Activated CD8-positive, alpha-beta T cell treated with anti-CD3 and anti-CD28 coated beads for 36 hours (primary cell): ENCODE measurements at regions of chr5 and their contacts with region 1.

Region 1: DNA sequence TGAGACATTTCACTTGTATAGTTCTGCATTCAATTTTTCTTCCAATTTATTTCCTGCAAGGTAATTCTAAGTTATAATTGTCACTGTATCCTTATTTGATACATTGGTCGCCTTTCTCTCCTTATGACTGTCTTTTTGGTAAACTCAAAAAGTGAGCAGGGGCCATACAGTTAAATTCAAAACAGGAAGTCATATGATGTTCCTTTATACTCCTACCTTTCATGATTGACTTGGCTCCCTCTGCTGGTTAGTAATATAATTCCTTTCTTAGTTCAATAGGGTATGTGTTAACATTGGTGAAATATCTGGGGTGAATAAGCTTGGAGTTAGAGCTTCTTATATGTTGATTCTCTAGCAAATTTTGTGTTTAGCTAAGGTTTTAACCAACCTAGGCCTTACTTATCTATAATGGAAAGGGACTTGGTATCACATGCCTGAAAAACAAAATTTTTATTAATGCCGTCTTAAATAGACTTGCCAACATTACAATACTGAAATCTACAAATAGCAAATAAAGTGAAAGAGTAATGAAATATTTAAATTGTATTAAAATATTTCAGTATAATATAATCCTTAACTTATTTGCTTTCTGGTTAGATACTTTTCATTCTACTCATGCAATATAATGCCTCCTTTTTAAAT is 6.0 kb upstream of the NIPBL start:
- DNase-seq: no peak
- ATAC-seq: peak; percentile 85
- H3K4me3 Mint-ChIP-seq: no peak overlapping the region
- H3K27ac Mint-ChIP-seq: peak overlapping the region; percentile 76
- H3K4me1 Mint-ChIP-seq: peaks cover 36% of the 10 kb centered on the region
- H3K27me3 Mint-ChIP-seq: no peaks in the 10 kb centered on the region
- CTCF ChIP-seq: peak; percentile 70

Region 2: GRCh38 chr5:36744773-36745589 is 125.5 kb before region 1 on chr5:
- CTCF ChIA-PET with region 1: interaction called, 42 read pairs
- POLR2A ChIA-PET with region 1: interaction called, 3 read pairs
- intact Hi-C with region 1: no loop called
- DNase-seq: peak; percentile 41
- ATAC-seq: peak; percentile 62
- H3K4me3 Mint-ChIP-seq: peak overlapping the region; percentile 71
- H3K27ac Mint-ChIP-seq: no peak overlapping the region
- H3K4me1 Mint-ChIP-seq: peaks cover 12% of the 10 kb centered on the region
- H3K27me3 Mint-ChIP-seq: peaks cover 47% of the 10 kb centered on the region
- CTCF ChIP-seq: no peak